ENCODE measurements at regions of chr7 and their contacts with region 1.

Region 1: GRCh38 chr7:90119178-90119971 is 34.9 kb upstream of the STEAP1 start:
- DNase-seq: peak; percentile 51
- H3K4me3 Mint-ChIP-seq: peak overlapping the region; percentile 50
- H3K27ac Mint-ChIP-seq: no peak overlapping the region
- H3K4me1 Mint-ChIP-seq: peaks cover 5% of the 10 kb centered on the region
- H3K27me3 Mint-ChIP-seq: peaks cover 23% of the 10 kb centered on the region

Region 2: GRCh38 chr7:88243345-88243909 is 1875.9 kb before region 1 on chr7:
- CTCF ChIA-PET with region 1: no interaction called
- intact Hi-C with region 1: loop called (anchors 2 kb)
- DNase-seq: no peak
- H3K4me3 Mint-ChIP-seq: no peak overlapping the region
- H3K27ac Mint-ChIP-seq: no peak overlapping the region
- H3K4me1 Mint-ChIP-seq: no peaks in the 10 kb centered on the region
- H3K27me3 Mint-ChIP-seq: peaks cover 16% of the 10 kb centered on the region

Region 3: GRCh38 chr7:88401007-88401623 is 1718.3 kb before region 1 on chr7:
- CTCF ChIA-PET with region 1: no interaction called
- intact Hi-C with region 1: loop called (anchors 5 kb)
- DNase-seq: peak; percentile 5
- H3K4me3 Mint-ChIP-seq: no peak overlapping the region
- H3K27ac Mint-ChIP-seq: no peak overlapping the region
- H3K4me1 Mint-ChIP-seq: peaks cover 9% of the 10 kb centered on the region
- H3K27me3 Mint-ChIP-seq: no peaks in the 10 kb centered on the region

Region 4: DNA sequence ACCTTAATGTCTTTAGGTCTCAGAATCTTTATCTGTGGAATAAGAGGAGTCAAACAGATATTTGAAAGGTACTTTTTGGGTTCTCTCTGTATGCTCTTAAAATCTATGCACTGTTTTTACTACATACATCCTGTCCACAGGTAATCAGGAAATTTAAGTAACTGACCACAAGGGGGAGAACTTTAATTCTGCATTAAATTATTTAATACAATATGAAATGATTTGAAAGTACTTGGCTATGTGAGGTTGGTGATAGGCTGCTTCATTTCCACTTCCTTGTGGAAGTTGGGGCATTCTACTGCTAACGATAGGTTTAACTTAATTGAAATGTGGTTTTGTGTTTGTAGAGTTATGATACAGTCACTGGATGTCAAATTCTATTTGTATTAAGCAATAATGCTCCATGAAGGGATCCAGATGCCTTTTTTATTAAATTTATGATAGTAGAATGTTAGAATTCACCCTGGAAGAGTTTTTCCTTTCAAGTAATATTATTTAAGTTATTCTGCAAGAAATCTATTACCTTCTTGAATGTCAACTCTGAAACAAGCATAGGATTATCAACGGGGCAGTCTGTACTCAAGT is 1329.8 kb before region 1 on chr7:
- CTCF ChIA-PET with region 1: no interaction called
- intact Hi-C with region 1: loop called (anchors 10 kb)
- DNase-seq: no peak
- H3K4me3 Mint-ChIP-seq: no peak overlapping the region
- H3K27ac Mint-ChIP-seq: no peak overlapping the region
- H3K4me1 Mint-ChIP-seq: no peaks in the 10 kb centered on the region
- H3K27me3 Mint-ChIP-seq: no peaks in the 10 kb centered on the region

Measured in activated naive CD4-positive, alpha-beta T cell treated with anti-CD3 and anti-CD28 coated beads for 36 hours (primary cell).